ENCODE measurements at regions of chr17 and their contacts with region 1.

Region 1: GRCh38 chr17:82876602-82877379 is 37.0 kb upstream of the ZNF750 start:
- DNase-seq: peak; percentile 81
- H3K4me3 ChIP-seq: no peak overlapping the region
- H3K27ac ChIP-seq: peak overlapping the region; percentile 100
- H3K4me1 ChIP-seq: peaks cover 41% of the 10 kb centered on the region
- H3K27me3 ChIP-seq: no peaks in the 10 kb centered on the region
- CTCF ChIP-seq: peak; percentile 24 to 65

Region 2: GRCh38 chr17:82781894-82782274 is 94.9 kb before region 1 on chr17:
- CTCF ChIA-PET with region 1: no interaction called
- dilution Hi-C with region 1: no loop called
- in situ Hi-C with region 1: loop called (anchors 5 kb)
- intact Hi-C with region 1: loop called (anchors 1 kb)
- DNase-seq: peak; percentile 62
- H3K4me3 ChIP-seq: no peak overlapping the region
- H3K27ac ChIP-seq: no peak overlapping the region
- H3K4me1 ChIP-seq: peaks cover 6% of the 10 kb centered on the region
- H3K27me3 ChIP-seq: no peaks in the 10 kb centered on the region
- CTCF ChIP-seq: peak; percentile 91 to 100

Region 3: GRCh38 chr17:82836823-82837357 is 39.9 kb before region 1 on chr17:
- CTCF ChIA-PET with region 1: no interaction called
- dilution Hi-C with region 1: loop called (anchors 5 kb)
- in situ Hi-C with region 1: loop called (anchors 5 kb)
- intact Hi-C with region 1: loop called (anchors 1 kb)
- DNase-seq: no peak
- H3K4me3 ChIP-seq: no peak overlapping the region
- H3K27ac ChIP-seq: peak overlapping the region; percentile 100
- H3K4me1 ChIP-seq: peaks cover 38% of the 10 kb centered on the region
- H3K27me3 ChIP-seq: no peaks in the 10 kb centered on the region
- CTCF ChIP-seq: peak; percentile 2 to 14

Region 4: GRCh38 chr17:82859431-82860403 is 17.1 kb before region 1 on chr17:
- CTCF ChIA-PET with region 1: no interaction called
- dilution Hi-C with region 1: no loop called
- in situ Hi-C with region 1: no loop called
- intact Hi-C with region 1: loop called (anchors 2 kb)
- DNase-seq: no peak
- H3K4me3 ChIP-seq: no peak overlapping the region
- H3K27ac ChIP-seq: no peak overlapping the region
- H3K4me1 ChIP-seq: peaks cover 30% of the 10 kb centered on the region
- H3K27me3 ChIP-seq: no peaks in the 10 kb centered on the region
- CTCF ChIP-seq: no peak

Region 5: GRCh38 chr17:83083323-83084201 is 206.8 kb after region 1 on chr17:
- CTCF ChIA-PET with region 1: no interaction called
- dilution Hi-C with region 1: no loop called
- in situ Hi-C with region 1: no loop called
- intact Hi-C with region 1: loop called (anchors 5 kb)
- DNase-seq: peak; percentile 80
- H3K4me3 ChIP-seq: no peak overlapping the region
- H3K27ac ChIP-seq: no peak overlapping the region
- H3K4me1 ChIP-seq: peaks cover 18% of the 10 kb centered on the region
- H3K27me3 ChIP-seq: peaks cover 9% of the 10 kb centered on the region
- CTCF ChIP-seq: no peak